ENCODE measurements at regions of chr6 and their contacts with region 1.

Region 1: DNA sequence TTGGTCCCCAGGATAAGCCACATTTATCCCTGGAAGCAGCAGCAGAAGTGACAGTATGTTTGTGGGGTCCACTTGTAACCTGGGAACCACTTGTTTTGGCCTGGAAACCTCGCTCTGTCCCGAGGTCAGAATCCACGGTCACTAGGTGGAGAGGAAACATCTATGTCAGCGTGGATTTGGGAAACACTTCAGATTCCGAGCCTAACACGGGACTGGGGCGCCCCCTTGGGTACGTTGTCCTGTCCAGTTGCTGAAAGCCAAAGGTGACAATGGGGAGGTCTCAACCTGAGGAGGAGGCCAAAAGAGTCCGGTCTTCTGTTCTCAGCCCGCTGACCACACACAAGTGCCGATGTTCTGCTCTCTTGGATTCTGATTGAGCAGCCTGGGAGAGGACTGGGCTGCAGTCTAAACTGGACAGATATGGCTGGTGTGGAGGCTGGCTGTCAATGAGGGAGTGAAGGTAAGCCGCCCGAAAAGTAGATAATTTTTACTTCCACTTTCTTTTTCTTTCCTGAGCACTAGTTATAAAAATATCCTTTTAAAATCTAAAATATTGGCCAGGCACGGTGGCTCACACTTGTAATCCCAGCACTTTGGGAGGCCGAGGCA is 4.9 kb upstream of the ZFP57 start:
- DNase-seq: no peak
- ATAC-seq: no peak
- H3K4me3 ChIP-seq: no peak overlapping the region
- H3K27ac ChIP-seq: no peak overlapping the region
- H3K4me1 ChIP-seq: no peaks in the 10 kb centered on the region
- H3K27me3 ChIP-seq: no peaks in the 10 kb centered on the region
- CTCF ChIP-seq: no peak
- EP300 ChIP-seq: no peak
- POLR2A ChIP-seq: no peak
- RAD21 ChIP-seq: no peak

Region 2: GRCh38 chr6:29696155-29697125 is 10.6 kb after region 1 on chr6:
- CTCF ChIA-PET with region 1: interaction called, 12 read pairs
- POLR2A ChIA-PET with region 1: no interaction called
- RAD21 ChIA-PET with region 1: interaction called, 3 read pairs
- SMC1A ChIA-PET with region 1: no interaction called
- in situ Hi-C with region 1: no loop called
- intact Hi-C with region 1: no loop called
- DNase-seq: no peak
- ATAC-seq: peak; percentile 74
- H3K4me3 ChIP-seq: no peak overlapping the region
- H3K27ac ChIP-seq: no peak overlapping the region
- H3K4me1 ChIP-seq: no peaks in the 10 kb centered on the region
- H3K27me3 ChIP-seq: no peaks in the 10 kb centered on the region; a peak in 1 of 4 replicates
- CTCF ChIP-seq: peak; percentile 37 to 64 (median 61)
- EP300 ChIP-seq: no peak
- POLR2A ChIP-seq: no peak
- RAD21 ChIP-seq: peak; percentile 38; the same call in 1 of the 2 replicates

Region 3: DNA sequence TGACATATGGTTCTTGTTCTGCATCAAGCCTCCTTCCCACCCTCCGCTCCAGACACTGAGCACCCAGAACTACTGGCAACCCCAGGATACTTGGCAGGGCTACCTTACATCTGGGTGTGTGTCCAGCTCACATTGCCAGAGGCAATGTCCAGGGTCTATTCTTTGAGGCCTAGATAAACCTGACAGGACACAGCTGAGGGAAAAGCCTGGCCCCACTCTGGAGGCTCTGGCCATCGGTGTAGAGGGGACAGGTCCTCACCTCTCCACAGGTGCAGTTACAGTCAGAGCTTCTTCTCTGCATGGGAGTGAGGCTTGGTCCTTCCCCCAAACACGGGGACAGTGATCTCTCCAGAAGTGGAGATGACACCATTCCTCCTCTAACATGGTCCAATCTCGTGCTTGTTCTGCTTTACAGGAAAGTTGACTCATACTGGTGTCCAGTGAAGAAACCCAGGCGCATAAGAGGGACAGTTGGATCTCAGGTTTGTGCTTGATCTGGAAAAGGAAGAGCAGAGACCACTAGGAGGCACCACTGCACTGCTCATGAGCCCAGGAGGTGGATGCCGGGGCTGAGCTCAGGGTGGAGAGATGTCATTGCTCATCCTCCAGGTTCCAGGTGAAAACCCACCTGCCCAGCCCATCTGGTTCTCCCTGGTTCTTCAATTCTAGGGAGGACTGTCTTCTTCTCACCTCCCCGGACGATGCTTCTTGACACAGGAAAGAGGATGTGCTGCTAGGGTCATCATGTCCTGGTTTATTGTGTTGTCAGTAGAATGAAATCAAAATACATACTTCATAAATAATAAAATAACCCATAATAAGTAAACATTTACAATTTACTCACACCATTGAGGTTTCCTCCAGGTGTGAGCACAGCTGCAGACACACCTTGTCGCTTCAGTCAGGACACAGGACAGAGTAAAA is 52.1 kb after region 1 on chr6:
- CTCF ChIA-PET with region 1: no interaction called
- POLR2A ChIA-PET with region 1: no interaction called
- RAD21 ChIA-PET with region 1: no interaction called
- SMC1A ChIA-PET with region 1: no interaction called
- in situ Hi-C with region 1: no loop called
- intact Hi-C with region 1: no loop called
- DNase-seq: no peak
- ATAC-seq: peak; percentile 92
- H3K4me3 ChIP-seq: no peak overlapping the region
- H3K27ac ChIP-seq: no peak overlapping the region
- H3K4me1 ChIP-seq: no peaks in the 10 kb centered on the region
- H3K27me3 ChIP-seq: no peaks in the 10 kb centered on the region
- CTCF ChIP-seq: peak; percentile 84 to 88 (median 86)
- EP300 ChIP-seq: no peak
- POLR2A ChIP-seq: no peak
- RAD21 ChIP-seq: peak; percentile 87

Measured in GM12878 (cell line).